Gastrocnemius medialis (tissue), 4 donors: ENCODE measurements at regions of chr1 and their contacts with region 1.

Region 1: GRCh38 chr1:169485544-169486278 is at the start of gene SLC19A2:
- DNase-seq: peak; percentile 100
- ATAC-seq: peak; percentile 72 to 75
- H3K4me3 ChIP-seq: peak within 1 kb of the TSS; percentile 75 to 94 (median 83)
- H3K27ac ChIP-seq: peak within 1 kb of the TSS; percentile 96 to 99 (median 98)
- H3K4me1 ChIP-seq: peaks cover 33 to 47% of the 10 kb centered on the region in 2 donors
- H3K27me3 ChIP-seq: no peaks in the 10 kb centered on the region
- CTCF ChIP-seq: peak in 2 of 5 experiments; percentile 36 to 44
- POLR2A ChIP-seq: peak; percentile 91 to 99
- total RNA-seq, gene SLC19A2: 93.3 to 176 (median 99.8) TPM

Region 2: DNA sequence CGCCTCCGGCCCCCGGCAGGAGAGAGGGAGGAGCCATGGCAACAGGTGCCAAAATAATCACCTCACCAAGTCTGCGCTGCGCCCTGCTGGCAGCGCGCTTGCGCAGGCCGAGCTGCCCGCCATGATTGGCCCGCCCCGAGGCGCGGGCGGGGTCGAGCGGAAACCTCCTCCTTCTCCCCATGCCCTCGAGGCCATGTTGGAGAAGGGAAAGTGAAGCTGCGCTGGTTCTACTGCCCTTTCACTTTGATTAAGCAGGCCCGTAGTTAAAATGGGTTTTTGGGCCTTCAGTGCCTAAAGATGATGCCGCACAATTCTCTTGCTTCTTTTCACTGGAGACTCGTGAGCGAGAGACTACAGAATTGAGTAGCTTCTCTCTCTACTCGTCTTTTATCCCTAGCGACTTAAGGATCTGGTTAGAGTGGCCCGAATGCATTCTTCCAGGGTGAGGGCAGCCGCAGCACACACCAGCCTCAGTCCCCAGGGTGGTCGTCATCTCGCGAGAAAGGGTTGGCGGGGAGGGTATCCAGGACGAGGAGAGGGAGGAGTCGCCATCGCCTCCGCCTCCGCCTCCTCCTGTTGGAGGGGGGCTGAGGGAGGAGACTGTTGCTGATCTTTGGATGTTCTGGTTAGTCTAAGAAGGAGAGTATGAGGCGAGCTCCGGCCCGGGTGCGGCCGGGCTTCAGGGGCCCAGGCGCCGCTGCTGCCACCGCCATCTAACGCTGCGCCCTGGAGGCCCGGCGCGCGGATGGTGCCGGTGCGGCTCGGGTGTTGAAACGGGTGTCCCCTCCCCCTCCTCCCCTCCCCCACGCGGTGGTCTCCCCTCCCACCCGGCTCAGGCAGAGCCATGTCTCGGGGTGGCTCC is 1549.4 kb before region 1 on chr1 and contains the start of gene DCAF6:
- in situ Hi-C with region 1: loop called in 1 of 4 experiments (anchors 25 kb)
- intact Hi-C with region 1: loop called (anchors 5 kb)
- DNase-seq: peak; percentile 96 to 98
- ATAC-seq: peak; percentile 85
- H3K4me3 ChIP-seq: peak within 1 kb of the TSS; percentile 76 to 94 (median 90)
- H3K27ac ChIP-seq: peak within 1 kb of the TSS; percentile 94 to 99 (median 98)
- H3K4me1 ChIP-seq: peaks cover 51 to 52% of the 10 kb centered on the region in 2 donors
- H3K27me3 ChIP-seq: no peaks in the 10 kb centered on the region
- CTCF ChIP-seq: no peak
- POLR2A ChIP-seq: peak; percentile 86 to 87
- total RNA-seq, gene DCAF6: 365 to 466 (median 389) TPM

Region 3: DNA sequence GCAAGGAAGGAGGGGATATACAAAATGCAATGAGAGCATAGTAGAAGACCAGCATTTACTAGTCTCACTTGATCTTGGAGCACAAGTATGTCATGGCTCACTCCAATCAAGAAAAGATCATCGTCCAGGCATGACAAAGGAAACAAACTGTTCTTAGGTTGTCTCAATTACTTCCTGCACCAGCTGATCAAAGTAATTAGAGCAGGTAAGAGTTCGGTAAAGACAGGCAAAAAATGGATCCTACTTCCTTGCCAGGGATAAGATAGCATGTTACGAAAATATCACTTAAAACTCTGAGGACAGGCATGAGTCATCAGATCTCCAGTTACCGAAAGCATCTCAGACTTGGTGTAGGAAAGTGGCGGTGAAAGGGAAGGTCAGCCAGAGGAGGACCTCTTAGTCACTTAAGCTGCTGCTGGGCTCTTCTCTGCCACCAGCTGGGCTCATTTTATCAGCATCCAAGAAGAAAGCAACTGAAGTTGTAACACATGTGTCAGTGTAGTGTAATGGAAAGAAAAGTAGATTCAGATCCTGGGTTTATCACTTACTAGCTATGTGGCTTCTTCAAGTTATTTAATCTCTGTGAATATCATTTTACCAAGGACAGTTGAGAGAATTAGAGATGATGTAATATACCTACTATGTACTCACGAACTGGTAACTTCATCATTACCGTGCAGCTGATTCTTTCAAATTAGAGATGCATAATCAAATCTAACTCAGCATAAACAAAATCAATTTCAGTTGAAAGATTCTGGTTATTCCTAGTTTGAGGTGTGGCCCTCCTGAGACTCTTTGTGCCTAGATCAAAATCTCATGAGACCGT is 862.5 kb before region 1 on chr1:
- in situ Hi-C with region 1: loop called in 2 of 4 experiments (anchors 25 kb)
- intact Hi-C with region 1: loop called (anchors 1 kb)
- DNase-seq: peak; percentile 88 to 92
- ATAC-seq: peak; percentile 88 to 93
- H3K4me3 ChIP-seq: peak overlapping the region in 3 of 4 donors; percentile 15 to 31 (median 24)
- H3K27ac ChIP-seq: peak overlapping the region; percentile 85 to 100 (median 90)
- H3K4me1 ChIP-seq: peaks cover 29 to 37% of the 10 kb centered on the region in 2 donors
- H3K27me3 ChIP-seq: no peaks in the 10 kb centered on the region
- CTCF ChIP-seq: peak in 2 of 5 experiments; percentile 22 to 25
- POLR2A ChIP-seq: peak in 1 of 2 donors; percentile 81

Region 4: GRCh38 chr1:169106095-169106920 is 379.4 kb before region 1 on chr1 and contains the start of gene ATP1B1:
- in situ Hi-C with region 1: loop called (anchors 5 to 25 kb)
- intact Hi-C with region 1: loop called (anchors 2 kb)
- DNase-seq: peak; percentile 82 to 89
- ATAC-seq: peak; percentile 57 to 64
- H3K4me3 ChIP-seq: peak within 1 kb of the TSS; percentile 65 to 94 (median 77)
- H3K27ac ChIP-seq: peak within 1 kb of the TSS; percentile 93 to 99 (median 96)
- H3K4me1 ChIP-seq: peaks cover 18 to 25% of the 10 kb centered on the region in 2 donors
- H3K27me3 ChIP-seq: no peaks in the 10 kb centered on the region
- CTCF ChIP-seq: peak; percentile 52 to 94 (median 83)
- POLR2A ChIP-seq: peak; percentile 97 to 99
- total RNA-seq, gene ATP1B1: 111 to 377 (median 324) TPM

Region 5: GRCh38 chr1:169511316-169512028 is 25.8 kb after region 1 on chr1:
- in situ Hi-C with region 1: no loop called
- intact Hi-C with region 1: loop called (anchors 1 kb)
- DNase-seq: peak; percentile 8 to 31
- ATAC-seq: peak; percentile 69 to 74
- H3K4me3 ChIP-seq: no peak overlapping the region
- H3K27ac ChIP-seq: peak overlapping the region in 3 of 4 donors; percentile 51 to 54 (median 52)
- H3K4me1 ChIP-seq: peaks cover 11 to 28% of the 10 kb centered on the region in 2 donors
- H3K27me3 ChIP-seq: no peaks in the 10 kb centered on the region
- CTCF ChIP-seq: no peak
- POLR2A ChIP-seq: no peak